ENCODE measurements at regions of chr12 and their contacts with region 1.

Region 1: DNA sequence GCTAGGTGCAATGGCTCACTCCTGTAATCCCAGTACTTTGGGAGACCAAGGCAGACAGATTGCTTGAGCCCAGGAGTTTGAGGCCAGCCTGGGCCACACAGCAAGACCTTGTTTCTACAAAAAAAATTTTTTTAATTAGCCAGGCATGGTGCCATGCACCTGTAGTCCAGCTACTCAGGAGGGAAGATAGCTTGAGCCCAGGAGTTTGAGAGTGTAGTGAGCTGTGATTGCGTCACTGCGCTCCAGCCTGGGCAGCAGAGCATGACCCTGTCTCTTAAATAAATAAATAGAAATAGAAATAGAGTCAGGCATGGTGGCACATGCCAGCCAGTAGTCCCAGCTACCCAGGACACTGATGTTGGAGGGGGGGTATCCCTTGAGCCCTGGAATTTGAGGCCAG is 36.7 kb upstream of the CLIP1 start:
- DNase-seq: no peak
- ATAC-seq: peak; percentile 49; the same call in 1 of the 2 replicates
- H3K4me3 ChIP-seq: no peak overlapping the region
- H3K27ac ChIP-seq: no peak overlapping the region
- H3K4me1 ChIP-seq: peaks cover 3% of the 10 kb centered on the region; the same call in 1 of the 2 replicates
- H3K27me3 ChIP-seq: no peaks in the 10 kb centered on the region
- CTCF ChIP-seq: no peak

Region 2: DNA sequence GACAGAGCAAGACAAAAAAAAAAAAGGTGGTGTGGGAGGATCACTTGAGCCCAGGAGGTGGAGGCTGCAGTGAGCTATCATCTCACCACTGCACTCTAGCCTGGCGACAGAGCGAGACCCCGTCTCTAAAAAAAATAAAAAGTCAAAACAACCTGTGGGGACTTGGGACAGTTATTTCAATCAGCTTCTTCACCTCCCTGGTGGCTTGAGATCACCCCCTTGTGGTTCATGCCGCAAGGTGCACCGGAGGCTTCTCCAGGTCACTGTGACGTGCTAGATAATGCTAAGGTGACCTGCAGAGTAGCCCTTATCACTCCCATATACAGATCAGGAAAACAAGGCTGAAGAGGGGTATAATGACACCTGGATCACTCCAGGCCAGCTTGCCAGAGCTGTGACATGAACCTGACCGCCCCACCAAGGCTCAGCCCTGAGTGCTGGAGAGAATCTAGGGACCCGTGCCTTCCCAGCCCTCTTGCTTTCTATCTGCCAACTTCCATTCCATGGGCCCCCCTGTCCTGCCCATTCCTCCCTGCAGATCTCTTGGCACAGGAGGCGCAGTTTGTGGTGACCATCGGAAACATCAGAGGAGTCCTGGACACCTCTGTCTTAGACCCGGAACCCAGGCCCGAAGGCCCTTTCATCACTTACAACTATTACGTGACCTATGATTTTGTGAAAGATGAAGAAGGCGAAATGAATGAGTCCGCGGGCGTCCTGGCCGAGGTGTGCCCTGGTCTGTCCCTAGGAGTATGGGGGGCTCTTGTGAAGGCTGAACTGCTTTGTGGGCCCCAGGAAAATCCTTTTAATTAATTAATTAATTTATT is 268.2 kb before region 1 on chr12:
- CTCF ChIA-PET with region 1: no interaction called
- POLR2A ChIA-PET with region 1: no interaction called
- in situ Hi-C with region 1: no loop called
- intact Hi-C with region 1: no loop called
- DNase-seq: peak; percentile 57
- ATAC-seq: peak; percentile 92
- H3K4me3 ChIP-seq: no peak overlapping the region
- H3K27ac ChIP-seq: no peak overlapping the region
- H3K4me1 ChIP-seq: no peaks in the 10 kb centered on the region
- H3K27me3 ChIP-seq: no peaks in the 10 kb centered on the region
- CTCF ChIP-seq: peak; percentile 95

Region 3: GRCh38 chr12:122406701-122407164 is 52.5 kb before region 1 on chr12:
- CTCF ChIA-PET with region 1: no interaction called
- POLR2A ChIA-PET with region 1: no interaction called
- in situ Hi-C with region 1: no loop called
- intact Hi-C with region 1: no loop called
- DNase-seq: no peak
- ATAC-seq: no peak
- H3K4me3 ChIP-seq: no peak overlapping the region
- H3K27ac ChIP-seq: peak overlapping the region; percentile 90
- H3K4me1 ChIP-seq: peaks cover 48% of the 10 kb centered on the region
- H3K27me3 ChIP-seq: no peaks in the 10 kb centered on the region
- CTCF ChIP-seq: no peak

Region 4: GRCh38 chr12:122505419-122506051 is 46.3 kb after region 1 on chr12:
- CTCF ChIA-PET with region 1: no interaction called
- POLR2A ChIA-PET with region 1: interaction called, 10 read pairs
- in situ Hi-C with region 1: no loop called
- intact Hi-C with region 1: no loop called
- DNase-seq: no peak
- ATAC-seq: no peak
- H3K4me3 ChIP-seq: no peak overlapping the region
- H3K27ac ChIP-seq: no peak overlapping the region
- H3K4me1 ChIP-seq: peaks cover 6% of the 10 kb centered on the region
- H3K27me3 ChIP-seq: no peaks in the 10 kb centered on the region
- CTCF ChIP-seq: no peak

Region 5: GRCh38 chr12:122593910-122594309 is 134.7 kb after region 1 on chr12:
- CTCF ChIA-PET with region 1: no interaction called
- POLR2A ChIA-PET with region 1: no interaction called
- in situ Hi-C with region 1: no loop called
- intact Hi-C with region 1: no loop called
- DNase-seq: no peak
- ATAC-seq: no peak
- H3K4me3 ChIP-seq: no peak overlapping the region
- H3K27ac ChIP-seq: no peak overlapping the region
- H3K4me1 ChIP-seq: no peaks in the 10 kb centered on the region
- H3K27me3 ChIP-seq: no peaks in the 10 kb centered on the region
- CTCF ChIP-seq: no peak